Activated CD4-positive, alpha-beta T cell treated with anti-CD3 and anti-CD28 coated beads for 36 hours (primary cell): ENCODE measurements at regions of chr15 and their contacts with region 1.

Region 1: GRCh38 chr15:65887565-65887964 is 18.3 kb downstream of the RAB11A start:
- DNase-seq: peak; percentile 67
- ATAC-seq: peak; percentile 94
- H3K4me3 Mint-ChIP-seq: no peak overlapping the region
- H3K27ac Mint-ChIP-seq: peak overlapping the region; percentile 82
- H3K4me1 Mint-ChIP-seq: peaks cover 78% of the 10 kb centered on the region
- H3K27me3 Mint-ChIP-seq: no peaks in the 10 kb centered on the region

Region 2: GRCh38 chr15:65460741-65461347 is 426.7 kb before region 1 on chr15:
- CTCF ChIA-PET with region 1: no interaction called
- POLR2A ChIA-PET with region 1: no interaction called
- intact Hi-C with region 1: loop called in 1 of 2 experiments (anchors 1 kb)
- DNase-seq: peak; percentile 72
- ATAC-seq: peak; percentile 99
- H3K4me3 Mint-ChIP-seq: no peak overlapping the region
- H3K27ac Mint-ChIP-seq: peak overlapping the region; percentile 12
- H3K4me1 Mint-ChIP-seq: peaks cover 10% of the 10 kb centered on the region
- H3K27me3 Mint-ChIP-seq: no peaks in the 10 kb centered on the region

Region 3: DNA sequence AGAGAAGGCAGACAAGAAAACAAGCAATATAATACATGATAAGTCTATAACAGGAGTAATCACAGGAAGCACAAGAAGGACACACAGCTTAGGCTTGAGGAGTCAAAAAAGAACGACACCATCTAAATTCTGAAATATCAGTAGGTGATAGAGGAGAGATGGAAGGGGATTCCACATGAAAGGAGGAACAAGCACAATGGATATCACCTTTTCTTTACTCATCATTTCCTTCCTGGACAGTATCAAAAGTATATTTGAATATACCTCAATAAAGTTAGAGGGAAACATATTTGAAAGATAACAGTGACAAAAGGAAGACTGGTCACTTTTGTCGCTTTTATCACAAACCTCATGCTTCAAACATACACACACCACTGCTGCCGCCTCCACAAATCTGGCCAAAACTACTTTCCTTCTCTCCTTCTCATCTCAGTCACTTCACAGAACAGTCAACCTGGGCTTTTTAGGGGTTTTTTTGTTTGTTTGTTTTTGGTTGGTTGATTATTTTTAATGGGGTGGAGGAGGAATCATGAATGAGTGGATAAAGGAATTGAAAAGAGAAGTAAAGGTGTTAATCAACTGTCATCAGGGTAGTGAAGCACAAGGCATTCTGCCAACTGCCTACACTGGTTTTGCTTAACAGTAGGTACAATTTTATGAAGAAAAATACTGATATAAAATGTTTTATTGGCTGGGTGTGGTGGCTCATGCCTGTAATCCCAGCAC is 114.0 kb before region 1 on chr15:
- CTCF ChIA-PET with region 1: no interaction called
- POLR2A ChIA-PET with region 1: no interaction called
- intact Hi-C with region 1: no loop called
- DNase-seq: peak; percentile 44
- ATAC-seq: peak; percentile 62
- H3K4me3 Mint-ChIP-seq: no peak overlapping the region
- H3K27ac Mint-ChIP-seq: peak overlapping the region; percentile 48
- H3K4me1 Mint-ChIP-seq: peaks cover 41% of the 10 kb centered on the region
- H3K27me3 Mint-ChIP-seq: no peaks in the 10 kb centered on the region

Region 4: DNA sequence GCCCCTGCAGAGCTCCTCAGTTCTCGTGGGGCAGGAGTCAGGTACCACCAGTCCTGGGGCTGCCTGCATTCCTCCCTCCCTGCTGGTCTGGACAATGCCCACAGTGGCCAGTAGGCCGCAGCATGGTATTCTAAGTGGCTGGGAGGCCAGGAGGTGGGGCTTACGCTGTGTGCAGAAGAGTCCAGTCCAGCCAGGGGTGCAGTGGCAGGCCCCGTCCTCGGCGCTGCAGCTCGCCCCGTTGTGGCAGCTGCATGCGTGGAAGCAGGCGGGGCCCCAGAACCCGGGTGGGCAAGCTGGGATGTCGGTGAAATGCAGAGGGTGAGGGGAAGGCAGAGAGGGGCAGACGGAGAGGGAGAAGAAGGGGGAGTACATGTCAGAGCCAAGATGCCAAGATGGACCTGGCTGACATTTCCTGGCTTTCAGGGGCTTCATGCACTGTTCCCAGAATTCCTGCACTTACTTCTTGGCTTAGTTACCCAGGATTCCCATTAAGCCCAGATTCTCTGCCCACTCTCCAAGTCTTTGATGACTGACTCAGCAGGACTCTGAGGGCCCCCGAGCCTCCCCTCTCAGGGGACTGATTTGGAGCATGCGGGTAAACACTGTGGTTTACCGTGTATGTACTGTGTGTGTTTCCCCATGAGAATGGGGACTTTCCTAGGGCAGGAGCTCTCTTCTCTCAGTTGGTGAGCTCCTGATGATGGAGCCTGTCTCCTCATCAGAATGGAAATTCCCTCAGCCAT is 29.3 kb after region 1 on chr15:
- CTCF ChIA-PET with region 1: no interaction called
- POLR2A ChIA-PET with region 1: no interaction called
- intact Hi-C with region 1: loop called (anchors 1 to 2 kb)
- DNase-seq: peak; percentile 71
- ATAC-seq: peak; percentile 95
- H3K4me3 Mint-ChIP-seq: no peak overlapping the region
- H3K27ac Mint-ChIP-seq: peak overlapping the region; percentile 55
- H3K4me1 Mint-ChIP-seq: peaks cover 31% of the 10 kb centered on the region
- H3K27me3 Mint-ChIP-seq: no peaks in the 10 kb centered on the region

Region 5: GRCh38 chr15:66115568-66116206 is 228.1 kb after region 1 on chr15:
- CTCF ChIA-PET with region 1: no interaction called
- POLR2A ChIA-PET with region 1: no interaction called
- intact Hi-C with region 1: no loop called
- DNase-seq: peak; percentile 17
- ATAC-seq: no peak
- H3K4me3 Mint-ChIP-seq: no peak overlapping the region
- H3K27ac Mint-ChIP-seq: no peak overlapping the region
- H3K4me1 Mint-ChIP-seq: peaks cover 2% of the 10 kb centered on the region
- H3K27me3 Mint-ChIP-seq: peaks cover 1% of the 10 kb centered on the region